Psoas muscle (tissue), 8 donors: ENCODE measurements at regions of chr1 and their contacts with region 1.

Region 1: GRCh38 chr1:202599677-202600431 is 110.4 kb downstream of the SYT2 start:
- DNase-seq: peak; percentile 67 to 80
- ATAC-seq: peak; percentile 65 to 91 (median 83)
- H3K4me3 ChIP-seq: no peak overlapping the region
- H3K27ac ChIP-seq: no peak overlapping the region
- H3K4me1 ChIP-seq: peaks cover 5% of the 10 kb centered on the region
- H3K27me3 ChIP-seq: no peaks in the 10 kb centered on the region
- CTCF ChIP-seq: peak; percentile 69

Region 2: GRCh38 chr1:202498542-202498941 is 101.3 kb before region 1 on chr1:
- intact Hi-C with region 1: loop called (anchors 5 kb)
- DNase-seq: no peak
- ATAC-seq: peak in 2 of 4 donors; percentile 41 to 51
- H3K4me3 ChIP-seq: no peak overlapping the region
- H3K27ac ChIP-seq: no peak overlapping the region
- H3K4me1 ChIP-seq: peaks cover 2% of the 10 kb centered on the region
- H3K27me3 ChIP-seq: no peaks in the 10 kb centered on the region
- CTCF ChIP-seq: no peak

Region 3: GRCh38 chr1:202531472-202531811 is 68.4 kb before region 1 on chr1:
- intact Hi-C with region 1: no loop called
- DNase-seq: no peak
- ATAC-seq: no peak
- H3K4me3 ChIP-seq: no peak overlapping the region
- H3K27ac ChIP-seq: no peak overlapping the region
- H3K4me1 ChIP-seq: peaks cover 2% of the 10 kb centered on the region
- H3K27me3 ChIP-seq: no peaks in the 10 kb centered on the region
- CTCF ChIP-seq: no peak

Region 4: GRCh38 chr1:202553560-202554038 is 46.3 kb before region 1 on chr1:
- intact Hi-C with region 1: no loop called
- DNase-seq: no peak
- ATAC-seq: peak in 3 of 4 donors; percentile 16 to 43 (median 30)
- H3K4me3 ChIP-seq: no peak overlapping the region
- H3K27ac ChIP-seq: peak overlapping the region; percentile 37
- H3K4me1 ChIP-seq: peaks cover 34% of the 10 kb centered on the region
- H3K27me3 ChIP-seq: no peaks in the 10 kb centered on the region
- CTCF ChIP-seq: no peak

Region 5: DNA sequence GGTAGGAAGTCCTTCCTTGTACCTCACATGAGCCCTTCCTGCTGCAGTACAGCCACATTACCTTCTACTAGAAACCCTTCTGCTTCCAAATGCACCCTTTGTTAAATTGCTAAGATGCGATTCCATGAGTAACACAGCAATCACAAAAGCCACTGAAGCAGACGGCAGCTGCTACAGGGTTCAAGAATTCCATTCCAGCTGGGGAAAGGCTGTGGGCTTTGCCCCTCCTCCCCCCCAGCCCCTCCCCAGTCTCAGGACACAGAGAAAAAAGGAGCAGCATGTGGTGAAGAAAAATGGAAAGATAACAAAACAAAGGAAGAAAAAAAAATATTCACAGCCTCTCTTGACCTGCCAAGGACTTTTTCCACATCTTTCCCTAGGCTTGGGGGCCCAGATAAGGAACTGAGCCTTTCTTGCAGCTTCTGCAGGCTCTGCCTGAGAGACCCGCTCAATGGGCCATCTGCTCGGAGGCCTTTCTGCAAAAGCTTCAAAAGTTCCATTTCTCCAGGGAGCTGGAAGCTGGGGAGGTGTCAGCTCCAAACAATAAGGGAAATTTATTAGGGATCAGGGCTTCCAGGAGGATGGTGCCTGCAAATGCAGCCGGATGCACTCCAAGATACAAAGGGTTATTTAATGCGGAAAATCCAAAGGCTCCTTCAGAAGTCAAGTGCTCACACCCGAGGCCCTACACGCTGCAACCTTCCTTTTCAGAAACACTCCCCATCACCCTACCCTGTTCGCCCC is 38.3 kb after region 1 on chr1:
- intact Hi-C with region 1: no loop called
- DNase-seq: no peak
- ATAC-seq: no peak
- H3K4me3 ChIP-seq: no peak overlapping the region
- H3K27ac ChIP-seq: no peak overlapping the region
- H3K4me1 ChIP-seq: peaks cover 5% of the 10 kb centered on the region
- H3K27me3 ChIP-seq: peaks cover 0 to 38% (median 8%) of the 10 kb centered on the region in 3 donors
- CTCF ChIP-seq: no peak

Region 6: GRCh38 chr1:203026031-203026989 is 426.5 kb after region 1 on chr1 and contains the start of gene PPFIA4:
- intact Hi-C with region 1: no loop called
- DNase-seq: peak; percentile 91 to 94
- ATAC-seq: peak; percentile 81 to 89 (median 85)
- H3K4me3 ChIP-seq: peak within 1 kb of the TSS; percentile 88
- H3K27ac ChIP-seq: peak within 1 kb of the TSS; percentile 90
- H3K4me1 ChIP-seq: peaks cover 35% of the 10 kb centered on the region
- H3K27me3 ChIP-seq: no peaks in the 10 kb centered on the region
- CTCF ChIP-seq: no peak
- total RNA-seq, gene PPFIA4: 29.1 to 99.8 (median 51.5) TPM